ENCODE measurements at regions of chr19 and their contacts with region 1.

Region 1: DNA sequence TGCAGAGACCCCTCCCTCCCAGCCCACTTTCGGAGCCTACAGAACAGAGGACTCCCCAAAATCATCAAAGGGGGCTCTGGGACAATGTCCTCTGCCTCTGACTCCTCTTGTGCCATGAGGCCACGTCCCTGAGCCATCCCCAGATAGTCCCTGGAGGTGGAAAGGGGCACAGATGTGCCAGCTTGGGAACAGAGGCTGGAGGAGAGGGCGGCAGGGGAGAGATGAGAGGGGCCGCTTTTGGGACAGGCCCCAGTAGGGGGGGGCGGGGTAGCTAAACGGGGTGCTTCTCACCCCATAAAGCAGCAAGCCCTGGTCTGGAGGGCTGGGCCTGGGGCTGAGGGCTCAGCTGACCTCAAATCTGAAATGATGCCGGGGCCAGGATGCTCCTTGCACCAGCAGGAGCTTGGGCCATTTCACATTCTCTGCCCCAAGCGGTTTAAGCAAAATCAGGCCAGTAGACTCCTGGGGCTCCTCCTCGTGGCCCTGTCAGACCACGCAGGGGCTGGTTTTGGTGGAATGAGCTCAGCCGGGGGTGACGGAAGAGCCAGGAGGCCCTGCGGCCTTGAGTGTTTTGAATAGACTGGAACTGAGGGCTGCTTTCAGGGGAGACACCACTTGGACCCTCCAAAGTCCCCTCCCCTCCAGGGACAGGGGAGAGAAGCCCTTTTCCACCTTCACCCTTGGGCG is 27.1 kb downstream of the ONECUT3 start:
- DNase-seq: no peak
- H3K4me3 Mint-ChIP-seq: no peak overlapping the region
- H3K27ac Mint-ChIP-seq: no peak overlapping the region
- H3K4me1 Mint-ChIP-seq: no peaks in the 10 kb centered on the region
- H3K27me3 Mint-ChIP-seq: peaks cover 45% of the 10 kb centered on the region

Region 2: DNA sequence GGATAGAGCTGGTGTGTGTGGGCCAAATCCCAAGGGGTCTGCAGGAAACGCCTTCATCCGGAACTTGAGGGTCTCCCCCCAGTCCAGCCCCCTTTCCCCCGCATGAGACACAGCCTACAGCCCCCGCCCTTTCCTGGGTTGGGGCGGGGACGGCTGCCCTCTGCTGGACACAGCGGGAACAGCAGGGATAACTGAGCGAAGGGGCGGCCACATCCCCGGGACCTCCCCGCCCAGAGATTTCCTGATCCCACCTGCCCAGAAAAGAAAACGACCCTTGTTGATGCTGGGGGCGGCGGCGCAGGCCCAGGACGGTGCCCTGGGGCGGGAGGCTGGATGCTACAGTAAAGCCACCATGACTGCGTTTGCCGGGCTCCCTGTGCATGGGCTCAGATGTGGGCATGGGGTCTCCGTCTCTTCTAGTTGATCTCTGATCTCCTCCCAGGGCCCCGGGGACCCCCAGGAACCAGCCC is 12.9 kb before region 1 on chr19:
- CTCF ChIA-PET with region 1: interaction called, 15 read pairs
- POLR2A ChIA-PET with region 1: interaction called, 3 read pairs
- DNase-seq: peak; percentile 59
- H3K4me3 Mint-ChIP-seq: no peak overlapping the region
- H3K27ac Mint-ChIP-seq: no peak overlapping the region
- H3K4me1 Mint-ChIP-seq: no peaks in the 10 kb centered on the region
- H3K27me3 Mint-ChIP-seq: peaks cover 60% of the 10 kb centered on the region

Measured in activated CD4-positive, alpha-beta memory T cell treated with anti-CD3 and anti-CD28 coated beads, Interleukin-2, amount 10 ng/mL, durations not matched to agents 7 days and 5 days (primary cell).